ENCODE measurements at regions of chr5 and their contacts with region 1.

Region 1: DNA sequence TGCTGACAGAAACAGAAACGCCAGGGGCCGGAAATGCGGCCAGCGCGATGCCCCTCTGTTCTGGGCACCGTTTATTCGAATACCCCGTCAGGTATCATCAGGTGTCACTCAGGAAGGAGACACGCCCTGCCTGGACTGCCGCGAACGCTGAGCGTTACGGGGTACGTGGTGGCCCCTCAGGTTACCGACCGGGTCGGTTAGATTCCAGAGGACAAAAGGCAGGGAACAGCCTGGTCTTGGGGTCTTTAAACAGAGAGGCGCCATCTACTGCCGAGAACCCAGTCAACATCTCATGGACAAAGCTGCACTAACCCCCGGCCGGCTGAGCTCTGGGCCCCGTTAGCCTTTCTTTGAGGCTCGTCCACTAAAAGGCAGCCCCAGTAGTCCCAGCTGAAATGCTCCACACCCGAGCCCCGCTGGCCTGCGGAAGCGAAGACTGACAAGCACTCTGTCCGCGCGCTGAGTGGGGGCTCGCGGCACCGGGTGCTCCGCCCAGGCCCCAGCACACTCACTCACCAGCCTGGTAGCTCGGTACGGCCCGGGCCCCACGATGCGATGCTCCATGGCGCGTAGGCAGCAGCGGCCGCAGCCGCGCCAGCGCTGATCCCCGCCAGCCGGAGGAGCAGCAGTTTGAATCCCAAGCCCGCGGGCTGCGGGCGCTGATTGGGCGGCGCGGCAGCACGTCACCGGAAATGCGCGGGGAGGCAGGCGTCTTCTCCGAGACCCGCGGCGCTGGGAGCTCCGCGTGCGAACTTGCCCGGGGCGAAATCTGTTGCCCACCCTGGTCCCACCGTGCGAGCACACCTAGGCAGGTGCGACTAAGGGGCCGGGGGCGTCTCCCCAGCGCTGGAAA is at the start of gene DEPDC1B:
- DNase-seq: peak; percentile 86
- H3K4me3 Mint-ChIP-seq: peak within 1 kb of the TSS; percentile 93
- H3K27ac Mint-ChIP-seq: peak within 1 kb of the TSS; percentile 91
- H3K4me1 Mint-ChIP-seq: peaks cover 30% of the 10 kb centered on the region
- H3K27me3 Mint-ChIP-seq: peaks cover 25% of the 10 kb centered on the region
- total RNA-seq, gene DEPDC1B: 22.2 and 25.1 TPM in 2 replicates

Region 2: GRCh38 chr5:60613826-60614225 is 85.9 kb before region 1 on chr5:
- intact Hi-C with region 1: no loop called
- DNase-seq: no peak
- H3K4me3 Mint-ChIP-seq: no peak overlapping the region
- H3K27ac Mint-ChIP-seq: no peak overlapping the region
- H3K4me1 Mint-ChIP-seq: peaks cover 8% of the 10 kb centered on the region
- H3K27me3 Mint-ChIP-seq: no peaks in the 10 kb centered on the region

Region 3: GRCh38 chr5:60677844-60678664 is 21.7 kb before region 1 on chr5:
- intact Hi-C with region 1: loop called (anchors 2 kb)
- DNase-seq: no peak
- H3K4me3 Mint-ChIP-seq: no peak overlapping the region
- H3K27ac Mint-ChIP-seq: no peak overlapping the region
- H3K4me1 Mint-ChIP-seq: peaks cover 12% of the 10 kb centered on the region
- H3K27me3 Mint-ChIP-seq: no peaks in the 10 kb centered on the region

Region 4: GRCh38 chr5:60687927-60688720 is 11.6 kb before region 1 on chr5:
- intact Hi-C with region 1: loop called (anchors 1 kb)
- DNase-seq: no peak
- H3K4me3 Mint-ChIP-seq: no peak overlapping the region
- H3K27ac Mint-ChIP-seq: peak overlapping the region; percentile 39
- H3K4me1 Mint-ChIP-seq: peaks cover 27% of the 10 kb centered on the region
- H3K27me3 Mint-ChIP-seq: no peaks in the 10 kb centered on the region

Region 5: DNA sequence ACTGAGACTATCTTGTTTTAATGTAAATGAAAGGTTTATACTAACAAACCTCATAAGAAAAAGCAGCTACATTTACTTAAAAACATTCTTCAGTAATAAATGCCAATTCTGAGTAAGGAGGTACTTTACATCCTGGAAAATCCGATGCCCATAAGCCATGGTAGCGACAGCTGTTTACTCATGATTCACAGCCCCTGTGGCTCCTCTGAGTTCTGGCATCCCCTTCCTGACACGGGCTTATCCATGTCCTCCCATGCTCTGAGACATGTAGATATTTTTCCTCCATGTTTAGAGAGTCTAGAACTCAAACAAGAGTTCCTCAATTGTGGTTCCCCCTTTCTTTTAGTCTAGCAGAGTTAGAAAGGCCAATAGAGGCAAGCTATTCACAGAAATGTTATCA is 63.3 kb after region 1 on chr5:
- intact Hi-C with region 1: no loop called
- DNase-seq: no peak
- H3K4me3 Mint-ChIP-seq: no peak overlapping the region
- H3K27ac Mint-ChIP-seq: no peak overlapping the region
- H3K4me1 Mint-ChIP-seq: no peaks in the 10 kb centered on the region
- H3K27me3 Mint-ChIP-seq: peaks cover 2% of the 10 kb centered on the region

Region 6: DNA sequence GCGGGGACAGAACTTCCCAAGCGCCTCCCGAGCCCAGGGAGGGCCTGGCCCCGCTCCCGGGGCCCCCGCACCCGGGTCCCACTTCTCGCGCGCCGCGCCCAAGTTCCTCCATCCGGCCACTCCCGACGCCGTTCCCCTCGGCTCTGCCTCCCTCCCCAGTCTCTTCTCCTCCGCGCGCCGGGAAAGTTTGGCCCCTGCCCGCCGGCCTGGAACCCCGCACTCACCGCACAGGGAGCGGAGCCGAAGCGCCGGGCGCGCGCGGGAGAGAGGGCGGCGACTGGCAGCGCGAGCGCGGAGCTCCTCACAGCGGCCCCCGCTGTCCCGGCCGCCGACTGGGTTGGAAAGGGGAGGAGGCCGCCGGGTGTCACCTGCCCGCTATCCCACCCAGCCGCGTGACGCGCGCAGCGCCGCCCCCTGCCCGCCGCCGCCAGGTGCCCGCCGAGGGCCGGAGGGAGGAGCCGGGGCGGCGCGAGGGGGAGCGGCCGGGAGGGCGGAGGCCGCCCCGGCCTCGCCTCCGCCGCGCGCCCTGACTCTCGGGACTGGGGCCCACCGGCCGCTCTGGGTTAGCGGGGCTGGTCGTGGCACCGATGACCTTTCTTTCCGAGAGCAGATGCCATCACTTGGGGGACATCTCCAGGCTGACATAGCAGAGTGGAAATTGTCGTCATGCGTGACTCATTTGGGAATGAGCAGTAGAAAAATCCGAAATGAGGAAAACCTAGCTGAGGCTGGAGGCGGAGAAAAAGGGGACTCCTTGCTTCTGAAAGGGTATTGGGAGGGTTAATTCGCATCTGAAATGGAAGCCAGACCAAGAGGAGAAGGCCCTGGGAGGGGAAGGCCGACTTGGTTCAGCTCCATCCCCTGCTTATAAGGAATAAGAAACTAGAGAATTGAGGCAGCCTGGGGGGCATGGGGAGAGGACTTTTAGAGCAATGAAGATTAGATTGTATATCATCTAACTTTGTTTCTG is 144.5 kb after region 1 on chr5 and contains the start of gene ELOVL7:
- intact Hi-C with region 1: loop called (anchors 5 kb)
- DNase-seq: peak; percentile 38
- H3K4me3 Mint-ChIP-seq: peak within 1 kb of the TSS; percentile 79
- H3K27ac Mint-ChIP-seq: no peak within 1 kb of the TSS
- H3K4me1 Mint-ChIP-seq: peaks cover 12% of the 10 kb centered on the region
- H3K27me3 Mint-ChIP-seq: peaks cover 50% of the 10 kb centered on the region
- total RNA-seq, gene ELOVL7: 0.68 and 0.90 TPM in 2 replicates

Region 7: DNA sequence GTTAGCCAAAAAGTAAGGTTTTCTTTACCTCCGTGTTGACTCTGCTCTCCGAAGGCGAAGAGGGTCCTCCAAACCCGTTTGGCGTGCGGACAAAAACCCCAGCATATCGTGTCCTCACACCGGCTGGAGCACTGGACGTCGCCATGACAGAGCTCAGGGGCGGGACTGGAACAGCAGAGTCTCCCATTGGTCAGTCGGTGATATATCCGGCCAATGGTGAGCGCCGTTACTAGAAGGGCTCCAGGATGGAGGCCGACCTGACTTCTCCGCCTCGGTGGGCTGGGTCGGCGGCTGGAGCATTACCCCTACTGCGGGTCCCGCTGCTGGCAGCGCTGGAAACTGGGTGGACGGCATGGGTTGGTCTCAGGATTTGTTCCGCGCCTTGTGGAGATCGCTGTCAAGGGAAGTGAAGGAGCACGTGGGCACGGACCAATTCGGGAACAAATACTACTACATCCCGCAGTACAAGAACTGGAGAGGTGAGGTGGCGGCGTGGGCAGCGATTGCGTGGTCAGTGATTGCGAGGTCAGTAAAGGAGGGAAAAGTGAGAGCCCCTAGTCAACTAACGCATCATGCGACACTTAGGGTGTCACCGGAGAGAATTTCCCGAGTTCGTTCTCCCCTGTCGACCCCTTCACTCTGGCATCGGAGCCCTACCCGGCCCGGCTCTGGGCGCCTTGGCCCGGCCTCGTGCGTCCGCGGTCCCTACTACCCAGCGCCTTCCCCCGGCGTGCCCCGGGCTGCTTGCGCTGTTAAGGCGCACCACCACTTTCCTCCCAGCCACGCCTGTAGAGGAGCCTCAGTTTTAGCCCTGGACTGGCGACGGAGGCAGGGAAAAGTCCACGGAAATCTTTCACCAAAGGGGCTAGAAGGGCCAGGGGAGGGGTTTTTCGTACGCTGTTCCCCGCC is 245.4 kb after region 1 on chr5 and contains the starts of genes ERCC8 and NDUFAF2:
- intact Hi-C with region 1: loop called (anchors 1 kb)
- DNase-seq: peak; percentile 85
- H3K4me3 Mint-ChIP-seq: no peak within 1 kb of the TSS
- H3K27ac Mint-ChIP-seq: peak within 1 kb of the TSS; percentile 75
- H3K4me1 Mint-ChIP-seq: peaks cover 19% of the 10 kb centered on the region
- H3K27me3 Mint-ChIP-seq: no peaks in the 10 kb centered on the region
- total RNA-seq, gene ERCC8: 9.3 and 10.2 TPM in 2 replicates
- total RNA-seq, gene NDUFAF2: 32.6 and 39.8 TPM in 2 replicates

Measured in activated T-helper 2 cell treated with anti-CD3 and anti-CD28 coated beads, Interferon-gamma antibody, Interleukin-2, Interleukin-4, amounts not matched to agents 10 μg/mL and 5 μg/mL and 100 μg/mL, durations not matched to agents 14 hours and 24 hours and 36 hours (primary cell).